B cell (primary cell): ENCODE measurements at regions of chr9 and their contacts with region 1.

Region 1: GRCh38 chr9:129802851-129803675 is at the start of gene TOR1B:
- DNase-seq: peak; percentile 98
- ATAC-seq: peak; percentile 94
- H3K4me3 ChIP-seq: peak within 1 kb of the TSS; percentile 41 to 96 (median 76)
- H3K4me3 Mint-ChIP-seq: peak within 1 kb of the TSS; percentile 96
- H3K27ac ChIP-seq: peak within 1 kb of the TSS; percentile 71 to 79
- H3K27ac Mint-ChIP-seq: peak within 1 kb of the TSS; percentile 95
- H3K4me1 ChIP-seq: peaks cover 6 to 13% of the 10 kb centered on the region in 2 donors
- H3K4me1 Mint-ChIP-seq: peaks cover 20% of the 10 kb centered on the region
- H3K27me3 ChIP-seq: no peaks in the 10 kb centered on the region
- H3K27me3 Mint-ChIP-seq: no peaks in the 10 kb centered on the region
- CTCF ChIP-seq: no peak
- total RNA-seq, gene TOR1B: 17.4 and 18.9 TPM in 2 replicates

Region 2: DNA sequence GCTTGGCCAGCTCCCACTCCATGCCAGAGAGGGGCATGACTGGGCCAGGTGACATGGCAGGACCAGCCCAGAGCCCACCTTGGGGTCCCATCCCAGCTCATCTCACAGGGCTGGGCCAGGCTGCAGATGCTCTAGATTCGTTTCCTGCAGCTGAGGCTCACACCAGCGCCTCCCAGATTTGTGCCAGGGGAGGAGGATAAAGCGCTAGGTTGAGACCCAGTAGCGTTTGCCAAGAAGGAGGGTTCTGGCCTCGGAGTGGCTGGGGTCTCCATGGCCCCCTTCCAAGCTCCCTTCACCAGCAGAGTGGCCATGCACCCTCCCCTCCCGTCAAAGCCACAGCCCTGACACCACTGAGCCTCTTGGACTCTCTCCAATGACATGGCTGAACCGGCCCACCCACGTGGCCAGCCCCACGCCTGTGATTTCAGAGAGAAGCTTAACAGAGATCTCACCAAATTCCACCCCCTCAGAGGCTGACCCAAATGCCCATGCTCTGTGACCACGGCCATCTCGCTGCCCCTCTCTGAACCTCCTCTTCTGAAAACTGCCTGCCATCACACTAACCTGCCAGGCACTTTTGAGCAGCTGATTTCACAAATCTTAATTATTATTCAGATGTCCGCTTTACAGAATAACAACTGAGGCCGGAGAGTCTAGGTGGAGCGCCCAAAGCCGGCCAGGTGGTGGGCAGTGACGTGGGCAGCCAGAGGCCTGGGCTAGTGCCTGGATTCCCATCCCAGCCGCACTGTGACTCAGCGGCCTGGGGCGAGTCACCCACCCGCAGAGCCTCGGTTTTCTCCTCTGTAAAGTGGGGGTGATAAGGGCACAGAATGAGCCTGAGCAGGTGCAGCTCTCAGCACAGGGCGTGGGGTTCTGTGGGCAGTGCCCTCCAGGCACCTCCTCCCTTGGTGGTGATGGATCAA is 337.9 kb before region 1 on chr9:
- CTCF ChIA-PET with region 1: no interaction called
- POLR2A ChIA-PET with region 1: no interaction called
- intact Hi-C with region 1: no loop called
- DNase-seq: no peak
- ATAC-seq: no peak
- H3K4me3 ChIP-seq: no peak overlapping the region
- H3K4me3 Mint-ChIP-seq: no peak overlapping the region
- H3K27ac ChIP-seq: no peak overlapping the region
- H3K27ac Mint-ChIP-seq: no peak overlapping the region
- H3K4me1 ChIP-seq: peaks cover 9 to 10% of the 10 kb centered on the region in 2 donors
- H3K4me1 Mint-ChIP-seq: peaks cover 2% of the 10 kb centered on the region
- H3K27me3 ChIP-seq: peaks cover 0 to 7% (median 2%) of the 10 kb centered on the region in 4 experiments
- H3K27me3 Mint-ChIP-seq: peaks cover 12% of the 10 kb centered on the region
- CTCF ChIP-seq: no peak

Region 3: GRCh38 chr9:129823935-129824601 is 21.0 kb after region 1 on chr9 and contains the start of gene TOR1A:
- CTCF ChIA-PET with region 1: no interaction called
- POLR2A ChIA-PET with region 1: no interaction called
- intact Hi-C with region 1: loop called (anchors 1 kb)
- DNase-seq: peak; percentile 95
- ATAC-seq: peak; percentile 92
- H3K4me3 ChIP-seq: peak within 1 kb of the TSS in 4 of 5 experiments; percentile 49 to 83 (median 76)
- H3K4me3 Mint-ChIP-seq: peak within 1 kb of the TSS; percentile 86
- H3K27ac ChIP-seq: peak within 1 kb of the TSS in 1 of 2 donors; percentile 68
- H3K27ac Mint-ChIP-seq: peak within 1 kb of the TSS; percentile 81
- H3K4me1 ChIP-seq: peaks cover 7 to 8% of the 10 kb centered on the region in 2 donors
- H3K4me1 Mint-ChIP-seq: peaks cover 16% of the 10 kb centered on the region
- H3K27me3 ChIP-seq: no peaks in the 10 kb centered on the region
- H3K27me3 Mint-ChIP-seq: no peaks in the 10 kb centered on the region
- CTCF ChIP-seq: no peak
- total RNA-seq, gene TOR1A: 30.3 and 35.3 TPM in 2 replicates

Region 4: DNA sequence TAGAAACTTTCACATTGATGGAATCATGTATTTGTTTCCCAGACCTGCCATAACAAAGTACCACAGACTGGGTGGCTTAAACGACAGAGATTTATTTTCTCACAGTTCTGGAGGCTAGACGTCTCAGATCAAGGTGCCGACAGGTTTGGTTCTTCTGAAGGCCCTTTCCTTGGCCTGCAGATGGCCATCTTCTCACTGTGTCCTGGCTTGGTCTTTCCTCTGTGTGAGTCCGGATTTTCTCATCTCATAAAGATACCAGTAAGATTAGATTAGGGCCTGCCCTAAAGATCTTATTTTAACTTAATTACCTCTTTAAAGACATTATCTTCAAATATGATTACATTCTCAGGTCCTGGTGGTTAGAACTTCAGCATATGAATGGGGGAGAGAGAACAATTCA is 38.0 kb after region 1 on chr9:
- CTCF ChIA-PET with region 1: no interaction called
- POLR2A ChIA-PET with region 1: no interaction called
- intact Hi-C with region 1: no loop called
- DNase-seq: no peak
- ATAC-seq: no peak
- H3K4me3 ChIP-seq: no peak overlapping the region
- H3K4me3 Mint-ChIP-seq: no peak overlapping the region
- H3K27ac ChIP-seq: no peak overlapping the region
- H3K27ac Mint-ChIP-seq: no peak overlapping the region
- H3K4me1 ChIP-seq: peaks cover 10 to 22% of the 10 kb centered on the region in 2 donors
- H3K4me1 Mint-ChIP-seq: peaks cover 29% of the 10 kb centered on the region
- H3K27me3 ChIP-seq: no peaks in the 10 kb centered on the region
- H3K27me3 Mint-ChIP-seq: no peaks in the 10 kb centered on the region
- CTCF ChIP-seq: no peak

Region 5: GRCh38 chr9:129954868-129955550 is 151.9 kb after region 1 on chr9:
- CTCF ChIA-PET with region 1: no interaction called
- POLR2A ChIA-PET with region 1: no interaction called
- intact Hi-C with region 1: no loop called
- DNase-seq: peak; percentile 45
- ATAC-seq: no peak
- H3K4me3 ChIP-seq: no peak overlapping the region
- H3K4me3 Mint-ChIP-seq: no peak overlapping the region
- H3K27ac ChIP-seq: peak overlapping the region in 1 of 2 donors; percentile 39
- H3K27ac Mint-ChIP-seq: peak overlapping the region; percentile 66
- H3K4me1 ChIP-seq: peaks cover 7 to 14% of the 10 kb centered on the region in 2 donors
- H3K4me1 Mint-ChIP-seq: peaks cover 27% of the 10 kb centered on the region
- H3K27me3 ChIP-seq: no peaks in the 10 kb centered on the region
- H3K27me3 Mint-ChIP-seq: no peaks in the 10 kb centered on the region
- CTCF ChIP-seq: no peak